ENCODE measurements at regions of chr1 and their contacts with region 1.

Region 1: GRCh38 chr1:22089787-22090186 is 37.3 kb downstream of the CDC42 start:
- DNase-seq: no peak

Region 2: GRCh38 chr1:22052115-22053016 is 37.4 kb before region 1 on chr1 and contains the start of gene CDC42:
- in situ Hi-C with region 1: loop called (anchors 5 kb)
- DNase-seq: peak; percentile 94
- total RNA-seq, gene CDC42: 318 and 331 TPM in 2 replicates